ENCODE measurements at regions of chr12 and their contacts with region 1.

Region 1: DNA sequence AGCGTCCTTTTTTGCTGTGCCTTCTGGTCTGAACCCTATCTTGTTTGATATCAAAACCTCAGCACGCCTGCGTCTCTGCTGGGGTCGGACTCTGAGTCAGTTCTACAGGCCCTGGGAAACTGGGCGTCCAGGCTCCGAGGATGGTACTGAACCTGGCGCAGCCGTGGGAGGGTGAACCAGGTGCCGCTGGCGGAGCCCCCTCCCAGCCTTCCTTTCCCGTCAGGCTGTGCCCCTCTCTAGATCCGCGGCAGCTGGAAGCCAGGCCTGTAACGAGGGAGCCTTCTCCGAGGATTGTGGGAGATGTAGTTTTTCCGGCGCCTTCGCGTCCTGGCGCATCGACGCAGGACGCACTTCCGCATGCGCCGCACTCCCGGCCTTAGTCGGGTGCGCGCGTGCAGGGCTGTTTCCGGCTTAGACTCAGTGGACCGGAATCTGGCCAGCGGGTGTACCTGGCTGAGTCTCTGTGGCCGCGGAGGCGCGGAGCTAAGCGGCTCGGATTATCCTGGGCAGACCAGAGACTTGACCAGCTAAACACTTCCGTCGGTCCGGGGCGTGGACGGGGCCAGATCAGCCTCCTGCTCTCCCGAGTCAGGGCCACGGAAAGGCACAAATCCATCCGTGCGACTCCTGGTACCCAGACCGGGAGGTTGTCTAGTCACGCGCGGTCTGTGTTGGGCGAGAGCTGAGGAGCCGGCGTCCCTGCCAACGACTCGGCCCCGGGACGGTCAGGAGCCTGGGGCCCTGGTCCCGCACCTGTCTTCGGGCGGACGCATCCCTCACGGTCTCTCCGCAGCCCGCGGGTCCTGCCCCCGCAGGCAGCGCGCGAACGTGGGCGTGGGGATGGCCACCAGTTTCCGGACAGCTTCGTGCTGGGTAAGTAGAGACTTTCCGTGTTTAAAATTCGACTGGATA is at the start of gene ZNF26:
- DNase-seq: peak; percentile 94
- ATAC-seq: peak; percentile 100
- total RNA-seq, gene ZNF26: 5.0 to 6.1 TPM

Region 2: GRCh38 chr12:132956011-132956788 is 30.1 kb before region 1 on chr12 and contains the start of gene ZNF605:
- intact Hi-C with region 1: loop called in 1 of 2 experiments (anchors 2 kb)
- DNase-seq: peak; percentile 95
- ATAC-seq: peak; percentile 95 to 97
- total RNA-seq, gene ZNF605: 12.4 to 14.0 TPM

Measured in left cardiac atrium (tissue), 4 donors.